ENCODE measurements at regions of chr1 and their contacts with region 1.

Region 1: DNA sequence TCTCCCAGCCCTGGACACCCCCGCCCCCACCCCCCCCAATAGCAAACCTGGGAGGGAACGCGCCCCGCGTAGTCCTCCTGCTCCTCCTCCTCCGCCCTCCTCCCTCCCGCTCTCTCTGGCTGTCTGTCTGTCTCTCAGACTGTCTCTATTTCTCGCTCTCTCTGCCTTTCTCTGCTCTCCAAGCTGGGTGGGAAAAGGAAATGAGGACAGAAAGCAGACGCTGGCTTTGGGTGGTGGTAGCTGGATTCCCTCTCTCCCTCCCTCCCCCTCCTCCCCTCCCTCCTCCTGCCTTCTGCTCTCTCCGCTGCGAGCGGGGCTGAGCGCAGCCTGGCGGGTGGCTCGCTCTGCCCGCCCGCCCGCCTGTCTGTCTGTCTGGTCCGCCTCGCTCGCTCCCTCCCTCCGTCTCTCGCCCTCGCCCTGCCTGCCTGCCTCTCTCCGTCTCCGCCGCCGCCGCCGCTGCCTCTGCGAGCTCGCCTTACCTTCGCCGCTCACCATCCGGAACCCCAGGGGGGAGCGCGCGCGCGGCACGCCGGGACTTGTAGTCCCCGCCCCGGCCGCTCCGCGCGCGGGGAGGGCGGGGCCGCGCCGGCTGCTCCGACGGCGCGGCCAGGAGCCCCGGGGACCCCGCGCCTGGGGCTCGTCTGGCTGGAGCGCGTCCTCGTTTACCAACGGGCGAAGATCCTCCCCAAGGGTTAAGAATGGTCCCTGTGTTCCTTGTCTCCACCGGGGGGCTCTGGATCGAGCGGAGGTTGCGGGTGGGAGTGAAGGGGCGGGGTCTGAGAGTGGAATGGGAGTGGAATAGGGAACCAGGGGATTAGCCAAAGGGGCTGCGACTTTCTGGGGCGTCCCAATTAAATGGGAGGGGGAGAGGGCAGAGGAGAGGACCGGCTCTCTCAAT is at the start of gene AHDC1:
- ATAC-seq: peak; percentile 40 to 82 (median 52)
- H3K4me3 ChIP-seq: peak within 1 kb of the TSS; percentile 79 to 100 (median 100)
- H3K27ac ChIP-seq: peak within 1 kb of the TSS; percentile 90 to 97
- H3K4me1 ChIP-seq: peaks cover 42 to 58% of the 10 kb centered on the region in 2 donors
- total RNA-seq, gene AHDC1: 8.6 to 30.2 (median 14.4) TPM

Region 2: DNA sequence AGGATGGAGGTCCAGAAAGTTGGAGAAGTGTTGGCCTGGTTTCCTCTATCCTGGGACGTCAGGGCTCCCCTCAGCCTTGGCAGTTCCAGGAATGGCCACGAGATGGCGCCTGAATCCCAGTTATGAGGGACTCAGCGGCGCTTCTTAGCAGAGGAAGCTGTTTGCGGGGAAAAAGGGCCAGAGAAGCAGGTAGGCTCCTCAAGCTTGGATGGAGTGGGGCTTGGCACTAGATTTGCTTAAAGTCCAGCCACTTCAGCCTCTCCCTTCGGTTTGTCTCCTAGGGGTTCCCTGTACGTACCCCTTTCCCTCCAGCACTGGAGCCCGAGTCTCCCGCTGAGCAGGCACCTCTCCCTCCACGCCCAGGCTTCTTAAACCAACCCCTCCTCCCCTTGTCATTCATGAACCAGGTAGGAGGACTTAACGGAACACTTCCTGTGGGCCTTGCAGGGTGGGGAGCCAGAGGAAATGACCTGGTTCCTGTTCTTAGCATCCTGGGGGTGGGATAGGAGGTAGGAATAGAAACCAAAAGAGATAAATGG is 559.2 kb before region 1 on chr1:
- in situ Hi-C with region 1: loop called in 1 of 9 experiments (anchors 25 kb)
- ATAC-seq: peak; percentile 76 to 95 (median 88)
- H3K4me3 ChIP-seq: no peak overlapping the region
- H3K27ac ChIP-seq: no peak overlapping the region
- H3K4me1 ChIP-seq: peaks cover 4 to 17% of the 10 kb centered on the region in 2 donors

Region 3: GRCh38 chr1:27300341-27301051 is 303.4 kb before region 1 on chr1:
- in situ Hi-C with region 1: loop called in 4 of 9 experiments (anchors 10 to 25 kb)
- ATAC-seq: peak; percentile 70 to 94 (median 78)
- H3K4me3 ChIP-seq: no peak overlapping the region
- H3K27ac ChIP-seq: peak overlapping the region; percentile 64 to 70
- H3K4me1 ChIP-seq: peaks cover 17 to 30% of the 10 kb centered on the region in 2 donors

Region 4: DNA sequence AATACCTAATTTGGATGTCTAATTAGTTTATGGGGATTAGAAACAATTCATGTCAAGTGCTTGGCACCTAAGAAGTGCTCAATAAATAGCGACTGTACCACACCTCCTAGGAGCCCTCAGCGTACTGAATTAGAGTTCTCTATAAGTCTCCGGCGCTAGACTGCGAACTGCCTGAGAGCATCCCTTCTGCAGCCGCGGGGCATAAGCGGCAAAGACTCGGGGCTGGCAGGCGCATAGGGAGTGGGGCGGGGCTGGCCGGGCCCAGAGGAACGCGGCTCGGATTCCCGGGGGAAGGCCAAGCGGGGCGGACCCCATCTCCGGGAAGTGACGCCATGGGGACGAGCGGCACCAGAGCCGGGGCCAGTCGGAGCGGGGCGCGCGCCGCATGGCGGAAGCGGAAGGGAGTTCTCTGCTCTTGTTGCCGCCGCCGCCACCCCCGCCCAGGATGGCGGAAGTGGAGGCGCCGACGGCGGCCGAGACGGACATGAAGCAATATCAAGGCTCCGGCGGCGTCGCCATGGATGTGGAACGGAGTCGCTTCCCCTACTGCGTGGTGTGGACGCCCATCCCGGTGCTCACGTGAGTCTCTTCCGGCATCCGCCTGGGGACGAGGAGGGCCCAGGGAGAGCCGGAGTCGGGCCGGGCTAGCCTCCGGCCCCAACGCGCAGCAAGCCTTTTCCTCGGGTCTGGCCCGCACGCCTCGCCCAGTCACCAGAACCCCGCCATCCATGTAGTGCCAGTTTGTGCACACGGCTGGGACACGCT is 281.9 kb before region 1 on chr1 and contains the start of gene TMEM222:
- in situ Hi-C with region 1: loop called in 3 of 9 experiments (anchors 25 kb)
- ATAC-seq: peak; percentile 91 to 97 (median 94)
- H3K4me3 ChIP-seq: peak within 1 kb of the TSS; percentile 66 to 97 (median 91)
- H3K27ac ChIP-seq: peak within 1 kb of the TSS; percentile 93 to 95
- H3K4me1 ChIP-seq: peaks cover 24 to 29% of the 10 kb centered on the region in 2 donors
- total RNA-seq, gene TMEM222: 27.0 to 57.4 (median 38.0) TPM

Region 5: GRCh38 chr1:27392096-27392777 is 211.7 kb before region 1 on chr1 and contains the start of gene GPR3:
- in situ Hi-C with region 1: loop called in 4 of 9 experiments (anchors 10 to 25 kb)
- ATAC-seq: peak; percentile 80 to 85 (median 82)
- H3K4me3 ChIP-seq: peak within 1 kb of the TSS; percentile 56 to 74 (median 68)
- H3K27ac ChIP-seq: peak within 1 kb of the TSS in 1 of 2 donors; percentile 43
- H3K4me1 ChIP-seq: peaks cover 7 to 14% of the 10 kb centered on the region in 2 donors
- total RNA-seq, gene GPR3: 0.56 to 4.0 (median 2.5) TPM

Region 6: GRCh38 chr1:27662707-27663393 is 58.9 kb after region 1 on chr1:
- in situ Hi-C with region 1: loop called in 2 of 9 experiments (anchors 5 kb)
- ATAC-seq: peak; percentile 14 to 78 (median 64)
- H3K4me3 ChIP-seq: no peak overlapping the region
- H3K27ac ChIP-seq: peak overlapping the region in 1 of 2 donors; percentile 56
- H3K4me1 ChIP-seq: peaks cover 0 to 13% of the 10 kb centered on the region in 2 donors

Measured in motor neuron (in vitro differentiated cells).